AG04449 (cell line): ENCODE measurements at regions of chrX and their contacts with region 1.

Region 1: DNA sequence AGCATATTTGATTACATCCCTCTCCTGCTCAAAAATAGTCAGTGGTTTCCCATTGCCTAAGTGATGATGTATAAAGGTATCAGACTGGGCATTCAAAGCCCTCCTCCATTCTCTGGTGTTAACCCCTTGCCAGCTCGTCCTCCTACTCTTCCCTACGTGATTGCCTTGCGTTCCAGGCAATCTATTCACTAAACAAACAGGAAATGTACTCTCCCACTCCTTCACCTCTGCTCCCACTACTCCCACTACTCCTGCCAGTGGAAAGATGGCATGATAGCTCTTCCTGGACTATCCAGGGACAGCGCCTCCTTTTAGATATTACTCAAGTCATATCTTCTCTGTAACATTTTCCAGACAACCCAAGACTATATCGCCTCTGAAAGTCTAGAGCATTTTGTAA is 5.8 kb downstream of the DGAT2L6 start:
- DNase-seq: no peak
- H3K4me3 ChIP-seq: no peak overlapping the region
- CTCF ChIP-seq: no peak

Region 2: GRCh38 chrX:69718102-69718501 is 465.0 kb before region 1 on chrX:
- CTCF ChIA-PET with region 1: no interaction called
- POLR2A ChIA-PET with region 1: no interaction called
- DNase-seq: no peak
- H3K4me3 ChIP-seq: no peak overlapping the region
- CTCF ChIP-seq: no peak

Region 3: DNA sequence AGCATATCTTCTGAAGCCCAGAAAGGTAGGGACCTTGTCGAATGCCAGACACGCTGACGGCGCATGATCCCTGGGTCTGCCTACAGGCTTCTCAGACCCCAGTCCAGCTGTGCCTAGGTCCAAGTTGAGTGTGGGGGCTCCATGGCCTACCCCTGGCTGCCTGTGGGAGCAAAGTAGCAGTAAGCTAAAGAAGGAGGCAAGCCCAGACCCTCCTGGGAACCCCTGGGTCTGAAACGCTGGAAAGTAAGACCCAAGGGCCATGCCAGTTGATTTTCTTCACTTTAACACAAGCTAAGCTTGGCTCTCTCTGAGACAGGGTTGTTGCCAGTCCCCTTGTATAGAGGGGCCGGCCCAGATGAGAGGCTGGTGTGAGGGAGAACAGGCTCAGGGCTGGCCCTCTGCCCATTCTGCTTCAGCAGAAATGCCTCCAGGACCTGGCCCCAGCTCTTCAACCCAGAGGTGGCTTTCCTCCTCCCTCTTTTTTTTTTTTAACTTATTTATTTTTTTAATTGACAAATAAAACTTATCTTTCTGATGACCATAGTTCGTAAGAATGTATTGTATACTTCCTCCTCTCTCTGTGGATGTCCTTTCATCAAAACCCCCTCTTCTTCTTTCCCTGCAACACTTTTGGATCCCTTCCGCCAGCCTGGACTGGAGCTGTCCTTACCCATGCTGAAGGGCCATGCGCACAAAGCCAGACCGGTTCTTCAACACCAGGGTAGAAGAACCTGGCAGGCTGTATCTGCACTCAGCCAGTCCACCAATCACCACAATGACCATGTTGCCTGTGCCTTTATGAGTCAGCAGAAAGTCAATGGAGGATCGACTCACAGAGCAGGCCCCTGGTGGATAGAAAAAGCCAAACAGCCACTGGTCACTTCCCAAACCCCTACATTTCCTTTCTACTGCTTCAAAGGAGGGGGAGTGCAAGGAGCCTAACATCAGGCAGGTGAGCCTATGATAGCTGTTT is 140.4 kb before region 1 on chrX:
- CTCF ChIA-PET with region 1: no interaction called
- POLR2A ChIA-PET with region 1: no interaction called
- DNase-seq: no peak
- H3K4me3 ChIP-seq: no peak overlapping the region
- CTCF ChIP-seq: no peak

Region 4: DNA sequence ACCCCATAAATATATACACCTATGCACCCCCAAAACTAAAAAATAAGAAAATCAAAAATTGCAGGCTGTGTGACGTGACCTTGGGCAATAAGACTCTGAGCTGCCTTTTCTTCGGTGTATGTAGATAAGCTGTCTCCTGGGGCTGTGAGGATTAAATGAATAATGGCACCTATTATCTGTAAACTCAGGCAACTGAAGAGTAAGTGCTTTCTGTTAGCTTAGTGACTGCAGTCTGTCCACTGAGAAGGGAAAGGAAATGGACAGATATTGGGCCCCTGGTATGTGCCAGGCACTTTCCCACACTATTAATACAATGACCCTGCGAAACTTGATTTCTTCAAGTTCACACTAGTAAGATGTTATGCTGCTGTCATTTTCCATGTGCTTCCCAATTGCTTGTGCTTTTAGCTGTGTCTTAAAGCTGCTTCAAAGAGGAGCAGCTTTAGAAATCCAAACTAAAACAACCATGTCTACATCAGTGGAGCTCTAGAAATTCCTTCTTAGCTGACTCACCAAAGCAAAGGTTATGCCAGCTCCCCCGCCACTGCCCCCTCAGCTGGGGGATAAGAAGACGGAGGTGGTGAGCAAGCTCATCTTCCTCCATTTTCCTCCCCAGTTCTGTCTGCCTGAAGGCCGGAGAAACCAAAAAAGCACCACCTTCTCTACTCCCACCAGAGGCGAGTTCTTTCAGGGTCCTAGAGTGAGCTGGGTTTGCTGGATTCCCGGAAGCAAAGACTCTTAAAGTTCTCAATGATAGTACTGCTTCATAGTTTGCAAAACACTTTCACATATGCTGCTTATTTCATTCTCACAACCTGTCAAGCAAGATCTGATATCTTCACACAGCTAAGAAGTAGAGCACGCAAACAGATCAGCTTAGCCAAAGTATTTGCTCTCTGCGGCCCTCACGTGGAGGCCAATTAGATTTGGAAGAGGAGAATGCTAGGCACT is 14.6 kb before region 1 on chrX:
- CTCF ChIA-PET with region 1: no interaction called
- POLR2A ChIA-PET with region 1: no interaction called
- DNase-seq: peak; percentile 21
- H3K4me3 ChIP-seq: no peak overlapping the region
- CTCF ChIP-seq: no peak

Region 5: GRCh38 chrX:70196961-70197805 is 14.1 kb after region 1 on chrX:
- CTCF ChIA-PET with region 1: interaction called, 10 read pairs
- POLR2A ChIA-PET with region 1: no interaction called
- DNase-seq: no peak
- H3K4me3 ChIP-seq: no peak overlapping the region
- CTCF ChIP-seq: peak; percentile 46